PC-9 (cell line): ENCODE measurements at regions of chr13 and their contacts with region 1.

Region 1: DNA sequence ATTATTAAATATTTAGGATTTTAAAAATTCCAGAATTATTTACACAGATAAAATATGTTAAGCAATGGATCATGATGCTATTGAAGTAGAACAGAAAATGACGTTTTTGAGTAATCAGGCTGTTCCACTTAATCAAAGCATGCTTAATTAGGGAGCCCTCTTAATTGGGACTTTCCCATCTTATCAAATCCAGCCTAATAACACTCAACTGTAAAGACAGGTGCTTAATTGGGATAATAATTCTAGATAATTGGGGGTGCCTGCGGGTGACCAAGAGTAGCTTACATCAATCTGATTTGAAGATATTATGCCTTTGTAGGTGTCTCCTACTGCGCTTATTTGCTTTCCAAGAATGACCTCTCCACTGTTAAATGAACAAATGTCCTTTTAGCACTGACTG is 742.2 kb upstream of the SLITRK6 start:
- DNase-seq: no peak
- H3K4me3 ChIP-seq: no peak overlapping the region
- H3K27ac ChIP-seq: no peak overlapping the region
- H3K4me1 ChIP-seq: no peaks in the 10 kb centered on the region
- H3K27me3 ChIP-seq: no peaks in the 10 kb centered on the region
- CTCF ChIP-seq: no peak

Region 2: DNA sequence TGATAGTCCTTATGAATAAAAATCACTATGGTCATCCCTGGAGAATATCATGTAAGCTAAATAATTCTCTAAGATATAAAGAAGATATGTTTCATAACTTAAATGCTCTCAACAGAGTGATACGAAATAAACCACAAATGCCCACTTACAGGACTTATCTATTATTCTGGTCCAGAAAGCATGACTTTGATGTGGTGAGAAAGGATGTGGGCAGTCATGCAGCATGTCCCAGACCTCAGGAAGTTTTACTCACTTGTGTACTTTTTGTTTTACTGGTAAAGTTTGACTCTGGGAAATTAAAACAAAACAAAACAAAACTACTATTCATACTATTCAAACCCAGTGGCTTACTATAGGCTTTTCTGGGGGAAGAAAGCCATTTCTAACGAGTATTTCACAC is 259.0 kb before region 1 on chr13:
- CTCF ChIA-PET with region 1: no interaction called
- POLR2A ChIA-PET with region 1: no interaction called
- intact Hi-C with region 1: no loop called
- DNase-seq: no peak
- H3K4me3 ChIP-seq: no peak overlapping the region
- H3K27ac ChIP-seq: no peak overlapping the region
- H3K4me1 ChIP-seq: no peaks in the 10 kb centered on the region
- H3K27me3 ChIP-seq: no peaks in the 10 kb centered on the region
- CTCF ChIP-seq: no peak

Region 3: GRCh38 chr13:86554066-86554465 is 12.6 kb after region 1 on chr13:
- CTCF ChIA-PET with region 1: no interaction called
- POLR2A ChIA-PET with region 1: interaction called, 21 read pairs
- intact Hi-C with region 1: no loop called
- DNase-seq: no peak
- H3K4me3 ChIP-seq: no peak overlapping the region
- H3K27ac ChIP-seq: no peak overlapping the region
- H3K4me1 ChIP-seq: no peaks in the 10 kb centered on the region
- H3K27me3 ChIP-seq: no peaks in the 10 kb centered on the region
- CTCF ChIP-seq: no peak

Region 4: DNA sequence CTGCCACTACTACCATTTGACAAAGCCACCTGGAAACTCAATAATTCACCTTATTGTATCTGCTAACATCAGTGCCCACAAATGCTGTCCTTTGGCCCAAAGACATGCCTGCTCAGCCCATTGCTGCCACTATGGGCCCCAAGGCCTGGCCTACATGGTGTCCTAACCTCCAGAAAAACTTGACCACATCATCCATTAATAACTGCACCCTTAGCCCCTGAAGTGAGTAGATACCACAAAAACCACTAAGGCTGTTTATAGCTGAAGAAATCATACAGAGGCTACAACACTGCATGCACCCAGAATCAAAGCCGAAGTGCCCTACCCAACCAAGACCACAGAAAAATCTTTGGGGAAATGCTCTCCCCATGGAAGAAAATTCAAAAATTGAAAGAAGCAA is 190.5 kb after region 1 on chr13:
- CTCF ChIA-PET with region 1: no interaction called
- POLR2A ChIA-PET with region 1: no interaction called
- intact Hi-C with region 1: no loop called
- DNase-seq: no peak
- H3K4me3 ChIP-seq: no peak overlapping the region
- H3K27ac ChIP-seq: no peak overlapping the region
- H3K4me1 ChIP-seq: no peaks in the 10 kb centered on the region
- H3K27me3 ChIP-seq: no peaks in the 10 kb centered on the region
- CTCF ChIP-seq: no peak